Testis (tissue), 5 donors: ENCODE measurements at regions of chr11 and their contacts with region 1.

Region 1: DNA sequence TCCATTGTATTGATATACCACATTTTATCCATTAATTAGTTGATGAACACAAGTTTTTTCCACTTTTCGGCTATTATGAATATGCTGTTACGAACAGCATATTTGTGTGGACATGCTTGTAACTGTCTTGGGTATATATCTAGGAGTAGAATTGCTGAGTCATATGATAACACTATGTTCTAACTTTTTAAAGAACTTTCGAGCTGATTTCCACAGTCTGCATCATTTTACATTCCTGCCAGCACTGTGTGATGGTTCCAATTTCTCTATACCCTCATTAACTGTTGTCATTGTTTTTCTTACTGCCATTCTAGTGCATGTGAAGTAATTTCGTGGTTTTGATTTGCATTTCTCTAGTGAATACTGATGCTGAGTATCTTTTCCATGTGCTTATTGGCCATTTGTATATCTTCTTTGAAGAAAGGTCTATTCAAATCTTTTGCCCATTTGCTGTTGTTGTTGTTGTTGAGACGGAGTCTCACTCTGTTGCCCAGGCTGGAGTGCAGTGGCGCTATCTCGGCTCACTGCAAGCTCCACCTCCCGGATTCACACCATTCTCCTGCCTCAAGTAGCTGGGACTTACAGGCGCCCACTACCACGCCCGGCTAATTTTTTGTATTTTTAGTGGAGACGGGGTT is 7.4 kb upstream of the RCE1 start:
- DNase-seq: no peak
- H3K4me3 ChIP-seq: no peak overlapping the region
- H3K27ac ChIP-seq: no peak overlapping the region
- H3K4me1 ChIP-seq: peaks cover 10% of the 10 kb centered on the region
- H3K27me3 ChIP-seq: no peaks in the 10 kb centered on the region
- CTCF ChIP-seq: no peak
- POLR2A ChIP-seq: no peak

Region 2: DNA sequence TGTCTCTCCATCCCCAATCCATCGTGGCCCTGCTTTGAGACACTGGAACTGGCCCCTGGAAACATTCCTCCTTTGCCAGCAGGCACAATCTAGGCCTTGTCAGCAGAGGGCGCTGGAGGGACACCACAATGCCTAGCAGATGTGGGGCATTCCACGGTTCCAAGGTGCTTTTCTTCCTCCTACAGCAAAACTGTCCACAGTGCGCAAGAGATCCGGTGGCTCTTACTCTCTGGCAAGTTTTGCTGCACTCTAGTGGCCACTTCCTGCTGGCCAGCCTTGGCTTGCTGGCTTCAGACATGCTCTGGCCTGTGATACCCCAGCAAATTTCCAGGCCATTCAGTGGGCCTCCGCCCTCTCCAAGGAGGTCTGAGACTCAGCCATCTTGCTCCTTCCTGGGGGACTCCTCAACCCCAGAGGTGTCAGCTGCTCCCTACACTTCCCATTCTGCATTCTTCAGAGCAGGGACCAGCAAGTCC is 141.1 kb before region 1 on chr11:
- intact Hi-C with region 1: loop called (anchors 10 kb)
- DNase-seq: peak; percentile 95
- H3K4me3 ChIP-seq: no peak overlapping the region
- H3K27ac ChIP-seq: no peak overlapping the region
- H3K4me1 ChIP-seq: no peaks in the 10 kb centered on the region
- H3K27me3 ChIP-seq: no peaks in the 10 kb centered on the region
- CTCF ChIP-seq: peak; percentile 89 to 97 (median 90)
- POLR2A ChIP-seq: no peak

Region 3: DNA sequence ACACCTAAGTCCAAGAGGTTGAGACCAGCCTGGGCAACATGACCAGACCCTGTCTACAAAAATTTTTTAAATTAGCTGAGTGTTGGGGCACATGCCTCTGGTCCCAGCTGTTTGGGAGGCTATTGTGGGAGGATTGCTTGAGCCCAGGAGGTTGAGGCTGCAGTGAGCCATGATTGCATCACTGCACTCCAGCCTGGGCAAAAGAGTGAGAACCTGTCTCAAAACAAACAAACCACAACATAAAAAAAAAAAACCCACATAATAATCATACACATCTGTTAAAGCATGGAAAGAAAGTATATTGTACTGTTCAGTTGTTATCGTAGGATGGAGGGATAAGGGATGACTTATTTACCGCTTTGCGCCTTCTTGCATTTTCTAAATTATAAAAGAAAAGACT is 394.5 kb after region 1 on chr11:
- intact Hi-C with region 1: no loop called
- DNase-seq: no peak
- H3K4me3 ChIP-seq: no peak overlapping the region
- H3K27ac ChIP-seq: no peak overlapping the region
- H3K4me1 ChIP-seq: no peaks in the 10 kb centered on the region
- H3K27me3 ChIP-seq: no peaks in the 10 kb centered on the region
- CTCF ChIP-seq: no peak
- POLR2A ChIP-seq: no peak